ENCODE measurements at regions of chr11 and their contacts with region 1.

Region 1: GRCh38 chr11:45332276-45332934 is 46.3 kb upstream of the SYT13 start:
- DNase-seq: peak in 1 of 2 donors; percentile 78
- H3K4me3 ChIP-seq: peak overlapping the region; percentile 11 to 13
- H3K27ac ChIP-seq: peak overlapping the region; percentile 59
- H3K4me1 ChIP-seq: no peaks in the 10 kb centered on the region
- H3K27me3 ChIP-seq: no peaks in the 10 kb centered on the region
- CTCF ChIP-seq: peak in 2 of 3 experiments; percentile 31 to 81
- POLR2A ChIP-seq: no peak

Region 2: DNA sequence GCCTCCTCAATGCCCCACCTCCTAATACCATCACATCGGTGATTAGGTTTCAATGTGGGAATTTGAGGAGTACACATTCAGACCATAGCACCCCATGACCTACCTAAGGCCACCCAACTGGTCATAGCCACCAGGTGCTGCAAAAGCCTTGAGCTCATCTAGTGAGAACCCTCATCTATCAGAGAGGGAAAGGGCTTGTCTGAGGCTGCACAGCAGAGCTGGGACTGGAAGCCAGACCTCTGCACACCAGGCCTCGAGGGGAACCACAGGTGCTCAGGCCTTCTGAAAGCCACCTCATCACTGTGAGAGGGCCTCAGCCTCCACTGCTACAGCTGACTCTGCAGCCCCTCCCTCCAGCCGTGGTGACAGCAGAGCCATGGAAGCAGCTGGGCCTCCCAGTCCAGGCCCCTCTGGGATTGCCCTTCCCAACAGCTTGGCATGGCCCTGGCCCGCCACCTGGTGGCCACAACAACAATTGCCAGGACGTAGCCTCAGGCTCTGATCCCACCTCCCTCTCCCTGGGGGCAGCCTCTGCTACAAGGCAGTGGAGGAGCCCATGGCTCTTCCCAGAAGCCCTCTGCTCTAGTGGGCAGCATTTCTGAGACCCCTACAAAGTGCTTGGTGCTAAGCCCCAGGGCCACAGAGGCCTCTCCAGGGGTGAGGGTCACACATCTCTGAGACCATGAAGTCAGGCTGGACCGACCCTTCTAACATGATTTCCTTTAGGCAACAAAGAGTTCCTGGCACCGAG is 227.0 kb before region 1 on chr11:
- intact Hi-C with region 1: loop called (anchors 5 kb)
- DNase-seq: peak; percentile 72 to 85
- H3K4me3 ChIP-seq: no peak overlapping the region
- H3K27ac ChIP-seq: no peak overlapping the region
- H3K4me1 ChIP-seq: peaks cover 8% of the 10 kb centered on the region
- H3K27me3 ChIP-seq: no peaks in the 10 kb centered on the region
- CTCF ChIP-seq: peak; percentile 84 to 94 (median 90)
- POLR2A ChIP-seq: no peak

Region 3: GRCh38 chr11:45267052-45267451 is 65.4 kb before region 1 on chr11:
- intact Hi-C with region 1: no loop called
- DNase-seq: no peak
- H3K4me3 ChIP-seq: no peak overlapping the region
- H3K27ac ChIP-seq: no peak overlapping the region
- H3K4me1 ChIP-seq: peaks cover 4% of the 10 kb centered on the region
- H3K27me3 ChIP-seq: no peaks in the 10 kb centered on the region
- CTCF ChIP-seq: no peak
- POLR2A ChIP-seq: no peak

Region 4: GRCh38 chr11:45354976-45355705 is 22.7 kb after region 1 on chr11:
- intact Hi-C with region 1: no loop called
- DNase-seq: no peak
- H3K4me3 ChIP-seq: peak overlapping the region; percentile 59 to 69
- H3K27ac ChIP-seq: peak overlapping the region; percentile 13
- H3K4me1 ChIP-seq: peaks cover 12% of the 10 kb centered on the region
- H3K27me3 ChIP-seq: no peaks in the 10 kb centered on the region
- CTCF ChIP-seq: no peak
- POLR2A ChIP-seq: no peak

Region 5: GRCh38 chr11:45371251-45372115 is 39.1 kb after region 1 on chr11:
- intact Hi-C with region 1: no loop called
- DNase-seq: no peak
- H3K4me3 ChIP-seq: no peak overlapping the region
- H3K27ac ChIP-seq: no peak overlapping the region
- H3K4me1 ChIP-seq: peaks cover 10% of the 10 kb centered on the region
- H3K27me3 ChIP-seq: no peaks in the 10 kb centered on the region
- CTCF ChIP-seq: peak; percentile 28 to 57 (median 44)
- POLR2A ChIP-seq: no peak